Heart right ventricle (tissue), 16 donors: ENCODE measurements at regions of chr6 and their contacts with region 1.

Region 1: GRCh38 chr6:16803294-16804200 is 42.3 kb upstream of the ATXN1 start:
- DNase-seq: peak; percentile 34 to 69
- ATAC-seq: peak; percentile 80 to 93 (median 90)
- H3K4me3 ChIP-seq: peak overlapping the region in 8 of 10 donors; percentile 17 to 49 (median 44)
- H3K27ac ChIP-seq: peak overlapping the region; percentile 12 to 87 (median 81)
- H3K4me1 ChIP-seq: peaks cover 3 to 69% (median 51%) of the 10 kb centered on the region in 9 donors
- H3K27me3 ChIP-seq: no peaks in the 10 kb centered on the region
- CTCF ChIP-seq: peak in 2 of 9 donors; percentile 18 to 23

Region 2: GRCh38 chr6:16770701-16771569 is 32.6 kb before region 1 on chr6:
- intact Hi-C with region 1: no loop called
- DNase-seq: peak; percentile 76 to 83
- ATAC-seq: peak; percentile 70 to 92 (median 88)
- H3K4me3 ChIP-seq: no peak overlapping the region
- H3K27ac ChIP-seq: peak overlapping the region in 3 of 10 donors; percentile 20 to 61 (median 47)
- H3K4me1 ChIP-seq: peaks cover 0 to 46% (median 32%) of the 10 kb centered on the region in 9 donors
- H3K27me3 ChIP-seq: no peaks in the 10 kb centered on the region
- CTCF ChIP-seq: peak; percentile 91 to 98 (median 95)

Region 3: DNA sequence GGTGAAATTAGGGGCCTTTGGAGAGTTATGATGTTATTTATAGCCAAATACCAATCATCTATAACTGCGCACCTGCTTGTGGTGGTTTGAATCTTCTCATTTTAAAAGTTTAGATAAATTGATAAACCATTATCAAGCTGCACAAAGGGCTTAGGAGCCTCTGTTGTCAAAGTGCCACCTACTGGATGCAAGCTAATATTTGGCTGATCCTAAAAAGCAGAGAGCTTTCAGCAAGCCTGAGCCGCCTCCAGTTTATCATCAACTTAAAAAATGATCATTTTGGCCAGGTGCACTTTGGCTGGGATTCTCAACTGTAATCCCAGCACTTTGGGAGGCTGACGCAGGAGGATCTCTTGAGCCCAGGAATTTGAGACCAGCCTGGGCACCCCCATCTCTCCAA is 16.2 kb after region 1 on chr6:
- intact Hi-C with region 1: no loop called
- DNase-seq: no peak
- ATAC-seq: no peak
- H3K4me3 ChIP-seq: no peak overlapping the region
- H3K27ac ChIP-seq: no peak overlapping the region
- H3K4me1 ChIP-seq: peaks cover 0 to 5% (median 0%) of the 10 kb centered on the region in 9 donors
- H3K27me3 ChIP-seq: no peaks in the 10 kb centered on the region
- CTCF ChIP-seq: peak in 5 of 9 donors; percentile 24 to 41 (median 29)

Region 4: DNA sequence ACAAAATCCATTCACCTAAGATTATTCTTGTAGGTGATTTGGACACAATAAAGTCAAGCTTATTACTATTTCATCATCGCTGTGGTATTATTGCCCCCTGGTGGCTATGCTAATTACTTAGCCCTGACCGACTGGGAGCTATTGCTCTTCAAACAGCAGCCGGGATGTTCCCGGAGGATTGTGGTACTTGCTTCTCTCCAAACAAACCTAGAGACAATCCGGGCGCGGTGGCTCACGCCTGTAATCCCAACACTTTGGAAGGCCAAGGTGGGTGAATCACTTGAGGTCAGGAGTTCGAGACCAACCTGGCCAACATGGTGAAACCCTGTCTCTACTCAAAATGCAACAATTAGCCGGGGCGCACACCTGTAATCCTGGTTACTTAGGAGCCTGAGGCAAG is 282.9 kb after region 1 on chr6:
- intact Hi-C with region 1: loop called in 1 of 10 experiments (anchors 10 kb)
- DNase-seq: peak in 1 of 2 donors; percentile 64
- ATAC-seq: peak; percentile 49 to 86 (median 74)
- H3K4me3 ChIP-seq: no peak overlapping the region
- H3K27ac ChIP-seq: no peak overlapping the region
- H3K4me1 ChIP-seq: peaks cover 0 to 11% (median 0%) of the 10 kb centered on the region in 9 donors
- H3K27me3 ChIP-seq: peaks cover 0 to 9% (median 0%) of the 10 kb centered on the region in 7 donors
- CTCF ChIP-seq: peak; percentile 41 to 78 (median 71)